Stomach (tissue), 19 donors: ENCODE measurements at regions of chr15 and their contacts with region 1.

Region 1: GRCh38 chr15:75249726-75250125 is 8.4 kb upstream of the GOLGA6C start:
- DNase-seq: no peak
- H3K4me3 ChIP-seq: no peak overlapping the region
- H3K27ac ChIP-seq: no peak overlapping the region
- H3K4me1 ChIP-seq: no peaks in the 10 kb centered on the region
- H3K27me3 ChIP-seq: peaks cover 0 to 22% (median 0%) of the 10 kb centered on the region in 3 donors
- CTCF ChIP-seq: no peak
- EP300 ChIP-seq: no peak
- POLR2A ChIP-seq: no peak

Region 2: DNA sequence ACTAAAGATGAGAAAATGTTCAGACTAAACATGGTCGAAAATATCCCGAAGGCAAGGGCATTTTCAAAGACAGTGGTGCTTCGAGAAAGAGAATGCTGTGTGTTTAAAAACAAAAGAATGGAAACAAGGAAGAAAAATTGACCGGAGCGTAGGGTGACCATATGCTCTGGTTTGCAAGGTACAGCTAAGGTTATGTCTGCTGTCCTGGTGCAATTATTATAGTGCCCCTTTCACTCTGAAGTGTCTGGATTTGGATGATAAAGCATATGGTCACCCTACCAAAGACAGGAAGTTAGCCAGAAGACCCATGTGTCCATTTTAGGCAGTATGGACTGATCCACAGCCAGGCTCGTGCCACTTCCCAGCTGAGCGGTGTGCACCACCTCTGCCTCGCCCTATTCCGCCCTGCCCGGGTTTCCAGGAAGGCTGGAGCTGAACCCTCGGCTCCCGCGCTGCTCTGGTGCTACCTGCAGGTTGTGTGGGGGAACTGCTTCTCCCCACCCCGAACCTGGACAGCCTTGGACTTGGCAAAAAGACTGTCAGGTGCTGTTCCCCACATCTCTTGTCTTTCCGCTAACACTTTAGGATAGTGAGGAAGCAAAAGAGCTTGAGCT is 58.2 kb after region 1 on chr15:
- intact Hi-C with region 1: loop called (anchors 10 kb)
- DNase-seq: peak; percentile 69 to 82
- H3K4me3 ChIP-seq: no peak overlapping the region
- H3K27ac ChIP-seq: no peak overlapping the region
- H3K4me1 ChIP-seq: peaks cover 0 to 5% (median 2%) of the 10 kb centered on the region in 4 donors
- H3K27me3 ChIP-seq: peaks cover 0 to 44% (median 4%) of the 10 kb centered on the region in 3 donors
- CTCF ChIP-seq: peak in 5 of 7 experiments; percentile 19 to 53 (median 30)
- EP300 ChIP-seq: no peak
- POLR2A ChIP-seq: no peak